Body of pancreas (tissue), 4 donors: ENCODE measurements at regions of chr21 and their contacts with region 1.

Region 1: DNA sequence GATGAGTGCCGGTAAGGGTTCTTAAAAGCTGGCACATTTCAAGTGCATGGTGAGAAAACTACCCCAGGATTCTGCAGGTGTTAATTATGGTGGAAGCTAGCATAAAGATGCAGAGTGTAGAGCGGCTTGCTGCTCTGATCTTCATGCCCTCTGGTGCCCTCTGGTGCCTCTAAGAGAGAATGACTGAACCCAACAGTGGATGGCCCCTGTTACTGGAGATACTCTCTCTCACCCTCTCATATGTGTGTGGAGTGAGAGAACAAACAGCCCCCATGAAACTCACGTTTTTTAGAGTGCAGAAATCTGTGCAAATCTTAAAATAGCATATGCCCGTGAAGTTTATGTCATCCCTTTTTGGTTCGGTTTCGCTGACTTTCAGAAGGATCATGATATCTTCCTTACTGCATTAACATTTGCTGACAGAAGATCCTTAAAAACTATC is 90.0 kb downstream of the GRIK1 start:
- DNase-seq: peak; percentile 63 to 75 (median 70)
- ATAC-seq: peak; percentile 97
- H3K4me3 ChIP-seq: no peak overlapping the region
- H3K27ac ChIP-seq: no peak overlapping the region
- H3K4me1 ChIP-seq: no peaks in the 10 kb centered on the region
- H3K27me3 ChIP-seq: no peaks in the 10 kb centered on the region
- CTCF ChIP-seq: peak; percentile 68 to 85 (median 79)
- POLR2A ChIP-seq: no peak

Region 2: DNA sequence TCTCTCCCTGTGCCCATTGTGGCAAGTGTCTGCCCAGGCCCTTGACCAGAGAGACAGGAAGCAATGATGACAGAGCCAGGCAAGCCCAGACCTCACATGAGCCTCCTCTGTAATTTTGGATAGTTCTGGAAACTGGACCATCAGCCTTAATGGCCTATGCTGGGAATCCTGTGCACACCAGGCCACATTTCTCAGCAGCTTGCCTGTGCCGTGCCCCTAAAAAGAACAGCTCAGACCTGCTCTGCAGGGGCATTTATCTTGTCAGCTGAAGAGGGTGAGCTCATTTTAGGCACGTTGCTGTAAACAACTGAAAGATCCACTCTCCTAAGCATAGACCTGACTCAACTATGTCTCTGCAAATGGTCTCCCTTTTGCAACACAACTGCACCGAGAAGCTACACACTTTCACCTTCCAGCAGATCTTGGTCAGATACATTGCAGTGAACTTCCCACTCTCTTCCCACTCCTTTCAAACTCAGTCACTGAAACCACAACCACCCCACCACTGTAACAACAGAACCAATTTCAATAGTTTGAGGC is 604.6 kb before region 1 on chr21:
- intact Hi-C with region 1: no loop called
- DNase-seq: peak in 2 of 4 donors; percentile 20 to 23
- ATAC-seq: peak; percentile 35
- H3K4me3 ChIP-seq: no peak overlapping the region
- H3K27ac ChIP-seq: peak overlapping the region in 2 of 4 donors; percentile 2 to 9
- H3K4me1 ChIP-seq: peaks cover 7% of the 10 kb centered on the region
- H3K27me3 ChIP-seq: no peaks in the 10 kb centered on the region
- CTCF ChIP-seq: no peak
- POLR2A ChIP-seq: no peak

Region 3: GRCh38 chr21:29477941-29478340 is 371.8 kb before region 1 on chr21:
- intact Hi-C with region 1: loop called (anchors 5 kb)
- DNase-seq: no peak
- ATAC-seq: no peak
- H3K4me3 ChIP-seq: no peak overlapping the region
- H3K27ac ChIP-seq: no peak overlapping the region
- H3K4me1 ChIP-seq: peaks cover 12% of the 10 kb centered on the region
- H3K27me3 ChIP-seq: no peaks in the 10 kb centered on the region
- CTCF ChIP-seq: no peak
- POLR2A ChIP-seq: no peak